Aorta (tissue), 5 donors: ENCODE measurements at regions of chr10 and their contacts with region 1.

Region 1: GRCh38 chr10:43436400-43437140 is at the start of gene ZNF487:
- DNase-seq: peak; percentile 93 to 96
- ATAC-seq: peak; percentile 99
- H3K4me3 ChIP-seq: peak within 1 kb of the TSS; percentile 59 to 79
- H3K27ac ChIP-seq: peak within 1 kb of the TSS; percentile 70 to 94
- H3K4me1 ChIP-seq: no peaks in the 10 kb centered on the region
- H3K27me3 ChIP-seq: no peaks in the 10 kb centered on the region
- total RNA-seq, gene ZNF487: 5.2 to 7.1 TPM

Region 2: GRCh38 chr10:43396928-43397624 is 39.5 kb before region 1 on chr10:
- intact Hi-C with region 1: loop called in 1 of 2 experiments (anchors 5 kb)
- DNase-seq: peak; percentile 93 to 94
- ATAC-seq: peak; percentile 92
- H3K4me3 ChIP-seq: peak overlapping the region; percentile 78 to 90
- H3K27ac ChIP-seq: peak overlapping the region; percentile 90 to 97
- H3K4me1 ChIP-seq: no peaks in the 10 kb centered on the region
- H3K27me3 ChIP-seq: no peaks in the 10 kb centered on the region

Region 3: DNA sequence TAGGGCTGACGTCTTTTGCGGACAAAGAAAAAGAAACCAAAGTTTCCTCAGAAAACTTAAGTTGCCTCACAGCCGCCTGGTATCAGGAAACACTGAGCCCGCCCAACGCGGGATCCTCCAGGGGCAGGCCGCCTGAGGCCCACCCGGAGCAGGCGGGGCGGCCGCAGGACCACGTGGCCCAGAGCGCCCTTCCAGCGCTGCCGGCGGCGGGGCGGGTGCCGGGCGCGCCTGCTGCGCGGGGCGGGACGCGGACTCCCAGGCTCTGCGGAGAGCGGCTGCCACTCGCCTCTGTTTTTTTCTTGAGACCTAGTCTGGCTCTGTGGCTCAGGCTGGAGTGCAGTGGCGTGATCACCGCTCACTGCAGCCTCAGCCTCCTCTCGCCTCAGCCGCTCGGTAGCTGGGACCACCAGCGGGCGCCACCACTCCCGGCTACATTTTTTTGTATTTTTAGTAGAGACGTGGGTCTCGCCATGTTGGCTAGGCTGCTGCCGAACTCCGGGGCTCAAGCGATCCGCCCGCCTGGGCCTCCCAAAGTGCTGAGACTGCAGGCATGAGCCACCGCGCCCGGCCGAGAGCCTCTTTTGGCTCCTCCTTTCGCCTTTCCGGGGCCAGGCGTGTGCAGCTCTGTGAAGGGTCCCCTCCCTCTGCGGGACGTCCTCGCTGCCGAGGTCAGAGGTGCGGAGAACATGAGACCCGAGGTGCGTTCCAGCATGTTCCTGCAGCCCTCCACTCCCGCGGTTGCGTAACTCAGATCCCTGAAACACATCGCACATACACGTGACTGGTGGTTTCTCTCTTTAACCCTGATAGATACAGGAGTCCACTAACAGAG is 16.0 kb before region 1 on chr10:
- intact Hi-C with region 1: loop called in 1 of 2 experiments (anchors 2 kb)
- DNase-seq: peak; percentile 94 to 95
- ATAC-seq: peak; percentile 99
- H3K4me3 ChIP-seq: peak overlapping the region; percentile 6 to 12
- H3K27ac ChIP-seq: peak overlapping the region; percentile 57 to 90
- H3K4me1 ChIP-seq: no peaks in the 10 kb centered on the region
- H3K27me3 ChIP-seq: no peaks in the 10 kb centered on the region